Left ventricle myocardium inferior (tissue), 1 donor: ENCODE measurements at regions of chr21 and their contacts with region 1.

Region 1: DNA sequence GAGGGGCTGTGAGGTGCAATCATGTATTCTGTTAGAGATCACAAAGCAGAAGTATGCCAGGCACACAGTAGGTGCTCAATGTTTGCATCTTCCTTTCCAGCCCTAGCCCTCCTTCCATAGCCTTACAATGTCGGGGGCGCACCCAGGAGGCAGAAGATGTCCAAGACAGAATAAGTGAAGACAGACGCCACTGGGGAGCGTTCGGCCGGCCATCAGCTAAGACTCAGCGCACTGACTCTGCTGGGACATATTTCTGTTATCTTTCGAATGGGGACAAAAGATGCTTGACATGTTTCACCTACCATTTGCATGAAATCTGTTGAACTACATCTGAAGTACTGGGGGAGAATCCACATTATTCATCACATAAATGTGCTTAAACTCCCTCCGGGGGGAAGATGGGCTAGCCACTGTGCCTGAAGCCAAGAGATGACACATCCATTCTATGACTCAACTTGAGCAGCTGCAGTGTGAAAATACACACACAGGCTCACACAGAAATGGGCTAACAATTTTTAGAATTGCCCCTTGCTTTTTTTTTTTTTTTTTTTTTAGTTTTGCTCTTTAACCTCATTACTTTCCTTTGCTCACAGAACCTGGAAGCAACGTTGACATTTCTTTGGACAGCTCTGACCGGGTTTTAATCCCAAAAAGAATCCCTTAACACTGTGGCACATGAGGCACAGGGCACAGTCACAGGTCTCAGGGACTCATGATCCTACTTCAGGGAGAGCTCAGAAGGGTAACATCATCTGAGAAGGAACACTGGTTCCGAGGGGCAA is 7.9 kb downstream of the TIAM1 start:
- DNase-seq: no peak
- H3K4me3 ChIP-seq: no peak overlapping the region
- H3K27ac ChIP-seq: no peak overlapping the region
- H3K4me1 ChIP-seq: peaks cover 3% of the 10 kb centered on the region
- H3K27me3 ChIP-seq: peaks cover 36% of the 10 kb centered on the region
- CTCF ChIP-seq: no peak

Region 2: DNA sequence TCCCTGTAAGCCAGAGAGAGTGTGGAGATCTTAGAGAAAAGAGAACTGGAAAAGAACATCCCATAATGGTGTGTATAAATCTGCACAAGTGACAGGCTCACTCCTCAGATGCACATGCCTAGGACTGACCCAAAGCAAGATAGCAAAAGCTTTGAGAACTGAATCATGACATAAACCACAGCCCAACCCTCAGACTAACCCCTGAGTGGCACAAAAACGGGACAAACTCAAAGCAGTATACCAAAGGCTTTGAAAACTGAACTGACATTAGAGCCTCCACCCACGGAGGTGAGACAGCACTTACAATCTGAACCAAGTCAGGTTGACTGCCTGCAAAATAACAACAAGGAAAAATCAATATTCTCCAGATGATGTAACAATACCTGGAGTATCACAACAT is 62.9 kb before region 1 on chr21:
- intact Hi-C with region 1: loop called (anchors 10 kb)
- DNase-seq: no peak
- H3K4me3 ChIP-seq: no peak overlapping the region
- H3K27ac ChIP-seq: no peak overlapping the region
- H3K4me1 ChIP-seq: no peaks in the 10 kb centered on the region
- H3K27me3 ChIP-seq: peaks cover 8% of the 10 kb centered on the region
- CTCF ChIP-seq: no peak